HepG2 (cell line): ENCODE measurements at regions of chrX and their contacts with region 1.

Region 1: GRCh38 chrX:63350941-63351616 is at the start of gene SPIN4:
- DNase-seq: peak; percentile 73
- ATAC-seq: peak; percentile 99
- H3K4me3 ChIP-seq: peak within 1 kb of the TSS; percentile 66 to 80 (median 73); a peak in 5 of 6 replicates
- H3K27ac ChIP-seq: peak within 1 kb of the TSS; percentile 73
- H3K4me1 ChIP-seq: peaks cover 13% of the 10 kb centered on the region; the same call in 1 of the 2 replicates
- H3K27me3 ChIP-seq: no peaks in the 10 kb centered on the region
- CTCF ChIP-seq: no peak
- EP300 ChIP-seq: no peak
- POLR2A ChIP-seq: peak; percentile 73 to 76
- RAD21 ChIP-seq: no peak
- total RNA-seq, gene SPIN4: 2.6 and 3.9 TPM in 2 replicates

Region 2: DNA sequence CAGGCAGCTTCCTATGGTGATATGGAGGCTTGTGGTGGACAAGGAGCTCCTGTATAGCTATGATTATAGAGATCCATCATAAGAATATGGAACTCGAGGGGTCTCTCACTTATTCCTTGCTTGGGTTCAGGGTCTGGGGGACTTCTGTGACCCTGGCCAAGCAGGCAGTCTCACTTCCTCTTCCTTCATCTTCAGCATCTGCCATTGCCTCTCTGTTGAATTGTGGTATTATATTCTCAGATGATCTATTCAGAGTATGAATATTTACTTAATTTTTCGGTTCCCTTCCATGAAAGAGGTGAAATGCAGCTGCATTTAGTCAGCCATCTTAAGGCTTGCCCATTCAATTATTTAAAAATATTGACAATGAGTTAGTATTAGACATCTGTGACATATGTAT is 292.9 kb before region 1 on chrX:
- CTCF ChIA-PET with region 1: no interaction called
- POLR2A ChIA-PET with region 1: no interaction called
- in situ Hi-C with region 1: no loop called
- intact Hi-C with region 1: no loop called
- DNase-seq: no peak
- ATAC-seq: no peak
- H3K4me3 ChIP-seq: no peak overlapping the region
- H3K27ac ChIP-seq: no peak overlapping the region
- H3K4me1 ChIP-seq: no peaks in the 10 kb centered on the region
- H3K27me3 ChIP-seq: no peaks in the 10 kb centered on the region
- CTCF ChIP-seq: no peak
- EP300 ChIP-seq: no peak
- POLR2A ChIP-seq: no peak
- RAD21 ChIP-seq: no peak

Region 3: DNA sequence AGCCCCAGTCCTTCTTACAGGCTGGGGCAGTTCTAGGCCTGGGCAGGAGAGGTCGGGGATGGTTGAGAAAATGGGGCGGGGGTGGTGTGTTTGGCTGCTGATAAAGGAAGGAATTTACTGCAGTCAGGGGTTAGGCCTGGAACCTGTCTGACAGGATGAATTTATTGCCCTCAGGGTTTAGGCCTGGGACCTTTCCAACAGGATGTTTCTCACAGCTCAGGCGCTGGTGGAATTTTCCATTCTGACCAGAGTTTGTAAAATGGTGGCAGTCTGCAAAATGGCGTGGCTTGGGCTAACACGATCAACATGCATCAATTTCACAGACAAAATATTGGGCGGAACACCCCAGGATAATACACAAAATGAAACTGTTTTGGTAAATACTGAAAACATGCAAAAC is 83.6 kb after region 1 on chrX:
- CTCF ChIA-PET with region 1: no interaction called
- POLR2A ChIA-PET with region 1: no interaction called
- in situ Hi-C with region 1: no loop called
- intact Hi-C with region 1: no loop called
- DNase-seq: no peak
- ATAC-seq: no peak
- H3K4me3 ChIP-seq: no peak overlapping the region
- H3K27ac ChIP-seq: no peak overlapping the region
- H3K4me1 ChIP-seq: no peaks in the 10 kb centered on the region
- H3K27me3 ChIP-seq: no peaks in the 10 kb centered on the region
- CTCF ChIP-seq: no peak
- EP300 ChIP-seq: no peak
- POLR2A ChIP-seq: no peak
- RAD21 ChIP-seq: no peak

Region 4: DNA sequence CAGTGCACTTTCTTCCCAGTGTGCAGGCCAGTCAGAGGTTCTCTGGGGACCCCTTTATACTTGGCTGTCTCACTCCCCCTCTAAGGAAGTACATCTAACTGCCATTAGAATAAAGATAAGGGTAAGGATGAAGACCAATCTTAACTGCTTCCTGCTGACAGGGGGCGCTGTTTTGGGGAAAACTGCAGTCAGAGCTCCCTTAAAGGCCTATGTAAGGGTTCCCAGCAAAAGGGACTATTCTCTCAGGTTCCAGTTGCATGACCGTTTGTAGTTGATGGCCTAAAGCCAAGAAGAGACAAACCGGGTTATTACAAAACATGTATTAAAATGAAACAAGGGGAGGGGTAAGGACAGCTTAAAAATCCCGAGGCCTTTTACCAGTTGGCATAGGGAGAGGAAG is 115.6 kb after region 1 on chrX:
- CTCF ChIA-PET with region 1: no interaction called
- POLR2A ChIA-PET with region 1: no interaction called
- in situ Hi-C with region 1: no loop called
- intact Hi-C with region 1: no loop called
- DNase-seq: no peak
- ATAC-seq: no peak
- H3K4me3 ChIP-seq: no peak overlapping the region
- H3K27ac ChIP-seq: no peak overlapping the region
- H3K4me1 ChIP-seq: no peaks in the 10 kb centered on the region
- H3K27me3 ChIP-seq: no peaks in the 10 kb centered on the region
- CTCF ChIP-seq: no peak
- EP300 ChIP-seq: no peak
- POLR2A ChIP-seq: no peak
- RAD21 ChIP-seq: no peak

Region 5: GRCh38 chrX:63506320-63506719 is 155.2 kb after region 1 on chrX:
- CTCF ChIA-PET with region 1: no interaction called
- POLR2A ChIA-PET with region 1: no interaction called
- in situ Hi-C with region 1: no loop called
- intact Hi-C with region 1: loop called (anchors 10 kb)
- DNase-seq: peak; percentile 15
- ATAC-seq: peak; percentile 69
- H3K4me3 ChIP-seq: no peak overlapping the region
- H3K27ac ChIP-seq: no peak overlapping the region
- H3K4me1 ChIP-seq: no peaks in the 10 kb centered on the region
- H3K27me3 ChIP-seq: no peaks in the 10 kb centered on the region
- CTCF ChIP-seq: peak; percentile 53
- EP300 ChIP-seq: no peak
- POLR2A ChIP-seq: no peak
- RAD21 ChIP-seq: no peak

Region 6: GRCh38 chrX:63560601-63561218 is 209.6 kb after region 1 on chrX:
- CTCF ChIA-PET with region 1: no interaction called
- POLR2A ChIA-PET with region 1: no interaction called
- in situ Hi-C with region 1: no loop called
- intact Hi-C with region 1: loop called (anchors 5 kb)
- DNase-seq: peak; percentile 81
- ATAC-seq: peak; percentile 98
- H3K4me3 ChIP-seq: peak overlapping the region; percentile 78 to 82 (median 81)
- H3K27ac ChIP-seq: peak overlapping the region; percentile 78
- H3K4me1 ChIP-seq: no peaks in the 10 kb centered on the region
- H3K27me3 ChIP-seq: no peaks in the 10 kb centered on the region; a peak in 1 of 5 replicates
- CTCF ChIP-seq: no peak
- EP300 ChIP-seq: no peak
- POLR2A ChIP-seq: peak; percentile 26 to 50; a peak in 2 of 4 replicates
- RAD21 ChIP-seq: no peak